Lower leg skin (tissue), 4 donors: ENCODE measurements at regions of chr5 and their contacts with region 1.

Region 1: GRCh38 chr5:134184155-134185135 is 7.7 kb upstream of the SKP1 start:
- DNase-seq: peak; percentile 48 to 91
- H3K4me3 ChIP-seq: no peak overlapping the region
- CTCF ChIP-seq: peak in 1 of 3 donors; percentile 89
- POLR2A ChIP-seq: no peak

Region 2: GRCh38 chr5:133508845-133509741 is 675.4 kb before region 1 on chr5:
- intact Hi-C with region 1: no loop called
- DNase-seq: peak in 1 of 2 donors; percentile 34
- H3K4me3 ChIP-seq: no peak overlapping the region
- CTCF ChIP-seq: no peak
- POLR2A ChIP-seq: no peak

Region 3: DNA sequence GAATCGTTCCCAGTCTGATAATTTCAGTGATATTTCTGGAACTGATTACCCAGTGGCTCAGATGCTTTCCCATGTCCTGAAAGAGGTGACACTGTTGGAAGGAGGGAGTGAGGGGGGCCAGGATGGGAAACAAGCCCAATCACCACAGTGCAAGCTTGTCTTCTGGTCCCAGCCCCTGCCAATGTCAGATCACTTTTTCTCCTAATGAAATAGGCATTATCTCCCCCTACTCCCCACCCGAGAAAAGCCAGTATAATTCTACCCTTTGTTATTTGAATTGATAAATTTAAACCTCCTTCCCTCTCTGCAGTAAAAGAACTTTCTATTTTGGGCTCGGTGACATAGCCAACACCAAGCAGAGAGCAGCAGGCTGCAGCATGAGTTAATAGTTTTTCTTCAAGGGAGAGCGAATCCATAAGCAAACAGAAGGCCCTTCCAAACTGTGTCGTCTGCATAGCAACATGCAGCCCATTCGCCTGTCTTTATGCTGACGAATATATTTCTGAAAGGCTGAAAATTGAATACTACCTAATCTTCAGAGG is 56.0 kb after region 1 on chr5:
- intact Hi-C with region 1: no loop called
- DNase-seq: no peak
- H3K4me3 ChIP-seq: no peak overlapping the region
- CTCF ChIP-seq: no peak
- POLR2A ChIP-seq: no peak

Region 4: GRCh38 chr5:134289509-134290113 is 105.2 kb after region 1 on chr5:
- intact Hi-C with region 1: loop called (anchors 5 kb)
- DNase-seq: peak in 1 of 2 donors; percentile 27
- H3K4me3 ChIP-seq: no peak overlapping the region
- CTCF ChIP-seq: peak in 1 of 3 donors; percentile 53
- POLR2A ChIP-seq: no peak

Region 5: DNA sequence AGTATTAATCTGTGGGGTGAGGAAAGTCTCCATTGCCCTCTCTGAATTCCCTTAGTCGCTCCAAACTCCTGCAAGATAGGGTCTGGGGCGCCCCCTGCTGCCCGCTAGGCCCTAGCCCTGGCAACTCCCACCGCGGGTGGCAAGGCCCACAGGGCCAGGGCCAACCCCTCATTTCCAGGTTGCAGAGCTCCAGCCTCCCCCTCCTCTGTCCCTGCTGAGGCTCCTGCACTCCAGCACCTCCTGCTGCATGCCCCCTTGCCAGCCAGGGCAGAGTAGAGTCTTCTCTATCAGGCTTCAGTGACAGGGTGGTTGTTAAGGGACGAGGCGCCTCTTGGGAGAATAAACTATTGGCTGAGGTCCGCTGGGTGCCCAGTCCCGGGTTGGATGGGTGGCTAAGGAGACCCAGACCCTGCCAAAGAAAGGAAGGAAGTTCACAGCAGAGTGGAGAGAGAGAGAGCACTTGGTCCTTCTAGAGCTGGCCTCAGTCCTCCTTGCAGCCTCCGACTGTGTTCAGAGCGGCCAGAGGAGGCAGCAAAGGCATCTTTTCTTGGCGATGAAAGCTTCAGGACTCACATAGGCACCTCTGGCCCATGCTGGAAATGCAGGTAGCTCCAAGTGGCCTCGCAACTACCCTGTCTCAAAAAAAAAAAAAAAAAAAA is 402.6 kb after region 1 on chr5:
- intact Hi-C with region 1: loop called (anchors 10 kb)
- DNase-seq: peak; percentile 68 to 96
- H3K4me3 ChIP-seq: no peak overlapping the region
- CTCF ChIP-seq: no peak
- POLR2A ChIP-seq: no peak